A549 (cell line): ENCODE measurements at regions of chr22 and their contacts with region 1.

Region 1: DNA sequence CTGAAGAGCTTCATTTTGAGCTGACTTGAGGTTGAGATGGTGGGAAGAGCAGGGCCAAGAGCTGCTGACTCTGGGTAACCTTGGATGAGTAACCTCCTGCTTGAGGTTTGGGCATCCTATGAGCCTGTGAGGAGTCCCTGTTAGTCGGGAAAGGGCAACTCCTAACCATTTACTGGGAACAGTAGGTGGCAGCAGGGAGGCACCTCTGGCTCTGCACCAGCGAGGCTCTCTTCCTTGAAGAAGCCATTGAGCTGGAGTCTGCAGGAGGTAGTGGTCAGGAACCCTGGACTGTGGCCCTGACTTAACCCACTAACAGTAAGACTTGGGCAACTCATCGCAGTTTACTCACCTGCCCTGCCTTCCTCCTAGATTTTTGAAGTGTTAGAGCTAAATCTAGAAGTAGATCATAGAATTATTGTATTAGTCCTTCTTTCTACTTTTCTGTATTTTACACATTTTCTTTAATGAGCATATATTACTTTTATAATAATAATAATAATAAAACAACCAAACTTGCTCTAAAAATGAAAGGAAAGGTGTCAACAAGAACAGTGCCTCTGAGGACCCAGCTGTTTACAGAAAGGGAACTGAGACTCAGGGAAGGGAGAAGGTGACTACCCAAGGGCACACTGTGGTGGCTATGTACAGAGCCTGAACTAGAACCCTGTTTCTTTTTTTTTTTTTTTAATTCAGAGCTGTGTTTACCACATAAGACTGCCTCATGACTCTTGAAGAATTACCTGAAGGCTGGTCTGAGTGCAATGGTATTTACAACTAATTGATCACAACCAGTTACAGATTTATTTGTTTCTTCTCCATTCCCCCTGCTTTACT is 47.5 kb downstream of the MEI1 start:
- DNase-seq: peak; percentile 61 to 78
- ATAC-seq: peak; percentile 99 to 100
- H3K4me3 ChIP-seq: no peak overlapping the region
- H3K27ac ChIP-seq: no peak overlapping the region
- H3K4me1 ChIP-seq: 0 out of 3 replicates have a peak, but pooled peaks cover 2% of the 10 kb centered on the region
- CTCF ChIP-seq: peak; percentile 67
- EP300 ChIP-seq: no peak
- POLR2A ChIP-seq: no peak
- RAD21 ChIP-seq: peak; percentile 63 to 74

Region 2: GRCh38 chr22:41725510-41726110 is 21.2 kb before region 1 on chr22:
- CTCF ChIA-PET with region 1: interaction called, 13 read pairs
- POLR2A ChIA-PET with region 1: no interaction called
- DNase-seq: peak in 1 of 2 experiments; percentile 8
- ATAC-seq: peak; percentile 65 to 82
- H3K4me3 ChIP-seq: no peak overlapping the region
- H3K27ac ChIP-seq: no peak overlapping the region
- H3K4me1 ChIP-seq: no peaks in the 10 kb centered on the region
- CTCF ChIP-seq: no peak
- EP300 ChIP-seq: no peak
- POLR2A ChIP-seq: no peak
- RAD21 ChIP-seq: no peak

Region 3: DNA sequence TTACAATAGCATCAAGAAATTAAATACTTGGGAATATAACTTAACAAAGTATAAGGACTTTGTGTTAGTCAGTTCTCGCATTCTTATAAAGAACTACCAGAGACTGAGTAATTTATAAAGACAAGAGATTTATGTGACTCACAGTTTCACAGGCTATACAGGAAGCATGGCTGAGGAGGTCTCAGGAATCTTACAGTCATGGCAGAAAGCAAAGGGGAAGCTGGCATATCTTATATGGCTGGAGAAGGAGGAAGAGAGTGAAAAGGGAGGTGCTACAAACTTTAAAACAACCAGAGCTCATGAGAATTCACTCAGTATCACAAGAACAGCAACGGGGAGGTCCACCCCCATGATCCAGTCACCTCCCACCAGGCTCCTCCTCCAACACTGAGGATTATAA is 21.6 kb after region 1 on chr22:
- CTCF ChIA-PET with region 1: interaction called, 20 read pairs
- POLR2A ChIA-PET with region 1: no interaction called
- DNase-seq: no peak
- ATAC-seq: no peak
- H3K4me3 ChIP-seq: no peak overlapping the region
- H3K27ac ChIP-seq: no peak overlapping the region
- H3K4me1 ChIP-seq: peaks cover 13% of the 10 kb centered on the region
- CTCF ChIP-seq: no peak
- EP300 ChIP-seq: no peak
- POLR2A ChIP-seq: no peak
- RAD21 ChIP-seq: no peak

Region 4: GRCh38 chr22:41832553-41833368 is 86.0 kb after region 1 on chr22 and contains the start of gene SREBF2:
- CTCF ChIA-PET with region 1: interaction called, 10 read pairs
- POLR2A ChIA-PET with region 1: no interaction called
- DNase-seq: peak; percentile 92 to 99
- ATAC-seq: peak; percentile 89 to 95
- H3K4me3 ChIP-seq: peak within 1 kb of the TSS; percentile 86
- H3K27ac ChIP-seq: peak within 1 kb of the TSS; percentile 97 to 99
- H3K4me1 ChIP-seq: peaks cover 14% of the 10 kb centered on the region
- CTCF ChIP-seq: no peak
- EP300 ChIP-seq: peak in 1 of 2 experiments; percentile 12; a peak in 1 of 5 replicates
- POLR2A ChIP-seq: peak; percentile 51
- RAD21 ChIP-seq: no peak; a peak in 1 of 5 replicates
- polyA plus RNA-seq, gene SREBF2: 19.4 and 29.3 TPM in 2 replicates

Region 5: GRCh38 chr22:41925655-41926460 is 179.1 kb after region 1 on chr22:
- CTCF ChIA-PET with region 1: interaction called, 13 read pairs
- POLR2A ChIA-PET with region 1: no interaction called
- DNase-seq: peak in 1 of 2 experiments; percentile 48
- ATAC-seq: peak; percentile 76 to 81
- H3K4me3 ChIP-seq: peak overlapping the region; percentile 64
- H3K27ac ChIP-seq: peak overlapping the region; percentile 74 to 90
- H3K4me1 ChIP-seq: no peaks in the 10 kb centered on the region
- CTCF ChIP-seq: peak; percentile 71
- EP300 ChIP-seq: no peak
- POLR2A ChIP-seq: no peak
- RAD21 ChIP-seq: no peak; a peak in 1 of 5 replicates